Heart left ventricle (tissue), 16 donors: ENCODE measurements at regions of chr1 and their contacts with region 1.

Region 1: DNA sequence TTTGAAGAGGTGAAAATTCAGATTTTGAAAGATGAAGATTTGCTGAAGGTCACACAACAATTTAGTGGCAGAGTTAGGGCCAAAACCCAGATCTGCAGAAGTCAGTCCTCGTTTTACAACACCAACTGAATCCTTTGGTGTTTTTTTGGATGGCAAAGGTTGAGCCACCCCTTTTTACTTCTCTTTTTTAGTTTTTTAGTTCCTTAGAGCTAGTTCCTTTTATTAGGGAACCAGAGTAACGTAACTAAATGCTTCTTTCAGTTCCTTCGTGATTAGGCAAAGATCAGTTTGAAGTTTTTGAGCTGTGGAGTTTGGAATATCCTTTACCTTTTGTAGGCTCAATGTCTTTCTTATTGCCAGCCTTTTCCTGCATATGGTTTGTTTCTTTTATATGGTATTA is 67.9 kb upstream of the ARID1A start:
- DNase-seq: no peak
- ATAC-seq: no peak
- H3K4me3 ChIP-seq: no peak overlapping the region
- H3K27ac ChIP-seq: peak overlapping the region in 1 of 12 donors; percentile 87
- H3K4me1 ChIP-seq: peaks cover 0 to 30% (median 0%) of the 10 kb centered on the region in 12 donors
- H3K27me3 ChIP-seq: no peaks in the 10 kb centered on the region
- CTCF ChIP-seq: no peak
- POLR2A ChIP-seq: no peak

Region 2: DNA sequence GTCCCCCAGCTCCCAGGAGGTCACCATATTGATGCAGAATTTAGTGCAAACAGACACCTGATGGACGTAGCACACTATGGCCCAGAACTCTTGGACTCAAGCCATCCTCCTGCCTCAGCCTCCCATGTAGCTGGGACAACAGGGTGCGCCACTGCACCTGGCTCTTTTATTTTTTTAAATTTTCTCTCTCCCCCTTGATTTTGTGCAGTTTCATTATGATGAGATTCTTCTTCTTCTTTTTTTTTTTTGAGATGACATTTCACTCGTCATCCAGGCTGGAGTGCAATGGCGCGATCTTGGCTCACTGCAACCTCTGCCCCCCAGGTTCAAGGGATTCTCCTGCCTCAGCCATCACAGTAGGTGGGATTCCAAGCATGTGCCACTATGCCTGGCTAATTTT is 34.6 kb before region 1 on chr1:
- intact Hi-C with region 1: no loop called
- DNase-seq: no peak
- ATAC-seq: no peak
- H3K4me3 ChIP-seq: no peak overlapping the region
- H3K27ac ChIP-seq: no peak overlapping the region
- H3K4me1 ChIP-seq: peaks cover 0 to 7% (median 0%) of the 10 kb centered on the region in 12 donors
- H3K27me3 ChIP-seq: no peaks in the 10 kb centered on the region
- CTCF ChIP-seq: no peak
- POLR2A ChIP-seq: no peak

Region 3: DNA sequence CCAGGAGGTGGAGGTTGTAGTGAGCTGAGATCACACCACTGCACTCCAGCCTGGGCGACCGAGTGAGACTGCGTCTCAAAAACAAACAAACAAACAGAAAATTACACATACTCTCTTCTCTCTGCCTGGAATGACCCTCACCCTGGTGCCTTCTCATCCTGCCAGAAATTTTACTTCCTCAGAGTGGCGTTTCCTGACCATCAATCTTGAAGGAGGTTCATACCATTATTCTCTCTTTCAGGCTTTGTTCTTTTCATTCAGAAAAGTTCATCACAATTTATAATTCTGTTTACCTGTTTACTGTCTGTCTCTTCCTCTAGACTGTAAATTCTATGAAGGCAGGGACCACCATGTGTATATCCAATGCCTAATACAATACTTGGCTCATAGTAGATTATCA is 19.1 kb before region 1 on chr1:
- intact Hi-C with region 1: loop called in 1 of 10 experiments (anchors 2 kb)
- DNase-seq: no peak
- ATAC-seq: no peak
- H3K4me3 ChIP-seq: no peak overlapping the region
- H3K27ac ChIP-seq: no peak overlapping the region
- H3K4me1 ChIP-seq: no peaks in the 10 kb centered on the region
- H3K27me3 ChIP-seq: peaks cover 0 to 8% (median 0%) of the 10 kb centered on the region in 9 donors
- CTCF ChIP-seq: no peak
- POLR2A ChIP-seq: no peak

Region 4: DNA sequence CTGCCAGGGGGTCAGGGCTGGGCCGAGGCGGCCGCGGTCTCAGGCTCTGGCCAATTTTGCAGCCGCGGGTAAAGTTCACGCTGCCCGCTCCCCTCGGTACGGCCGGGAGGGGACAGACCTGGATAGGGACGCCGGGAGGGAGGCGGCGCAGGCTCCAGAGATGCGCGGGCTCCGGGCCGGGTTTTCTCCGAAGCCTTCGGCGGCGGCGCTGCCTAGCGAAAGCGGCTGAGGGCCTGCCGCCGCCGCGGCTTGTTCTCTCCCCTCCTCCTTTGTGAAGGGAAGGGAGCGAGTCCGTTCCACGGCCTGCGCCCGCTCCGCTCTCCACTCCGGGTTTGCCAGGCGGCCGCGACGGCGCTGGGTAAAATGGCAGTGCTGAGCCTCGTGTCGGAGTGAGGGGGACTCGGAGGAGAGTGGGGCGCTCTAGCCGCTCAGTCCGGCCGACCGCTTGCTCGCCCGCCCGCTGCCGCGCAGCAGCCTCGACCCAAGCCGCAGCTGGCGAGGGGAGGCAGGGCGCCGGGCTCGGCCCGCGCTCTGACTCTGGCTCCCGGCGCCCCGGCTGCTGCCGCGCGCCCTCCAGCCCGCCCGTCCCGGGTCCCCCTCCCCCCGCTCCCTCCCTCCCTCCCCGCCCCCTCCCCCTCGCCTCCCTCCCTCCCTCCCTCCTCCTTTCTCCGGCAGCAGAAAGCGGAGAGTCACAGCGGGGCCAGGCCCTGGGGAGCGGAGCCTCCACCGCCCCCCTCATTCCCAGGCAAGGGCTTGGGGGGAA is 67.6 kb after region 1 on chr1 and contains the start of gene ARID1A:
- intact Hi-C with region 1: no loop called
- DNase-seq: peak; percentile 96 to 99 (median 96)
- ATAC-seq: peak; percentile 65 to 79 (median 74)
- H3K4me3 ChIP-seq: peak within 1 kb of the TSS; percentile 80 to 96 (median 92)
- H3K27ac ChIP-seq: peak within 1 kb of the TSS; percentile 89 to 98 (median 96)
- H3K4me1 ChIP-seq: peaks cover 16 to 59% (median 49%) of the 10 kb centered on the region in 12 donors
- H3K27me3 ChIP-seq: peaks cover 0 to 4% (median 0%) of the 10 kb centered on the region in 9 donors
- CTCF ChIP-seq: peak in 4 of 12 donors; percentile 8 to 27 (median 14)
- POLR2A ChIP-seq: peak in 1 of 2 donors; percentile 61
- total RNA-seq, gene ARID1A: 29.0 to 73.9 (median 49.9) TPM

Region 5: GRCh38 chr1:26811057-26811456 is 183.1 kb after region 1 on chr1:
- intact Hi-C with region 1: no loop called
- DNase-seq: no peak
- ATAC-seq: no peak
- H3K4me3 ChIP-seq: no peak overlapping the region
- H3K27ac ChIP-seq: no peak overlapping the region
- H3K4me1 ChIP-seq: peaks cover 0 to 18% (median 0%) of the 10 kb centered on the region in 12 donors
- H3K27me3 ChIP-seq: no peaks in the 10 kb centered on the region
- CTCF ChIP-seq: no peak
- POLR2A ChIP-seq: no peak

Region 6: DNA sequence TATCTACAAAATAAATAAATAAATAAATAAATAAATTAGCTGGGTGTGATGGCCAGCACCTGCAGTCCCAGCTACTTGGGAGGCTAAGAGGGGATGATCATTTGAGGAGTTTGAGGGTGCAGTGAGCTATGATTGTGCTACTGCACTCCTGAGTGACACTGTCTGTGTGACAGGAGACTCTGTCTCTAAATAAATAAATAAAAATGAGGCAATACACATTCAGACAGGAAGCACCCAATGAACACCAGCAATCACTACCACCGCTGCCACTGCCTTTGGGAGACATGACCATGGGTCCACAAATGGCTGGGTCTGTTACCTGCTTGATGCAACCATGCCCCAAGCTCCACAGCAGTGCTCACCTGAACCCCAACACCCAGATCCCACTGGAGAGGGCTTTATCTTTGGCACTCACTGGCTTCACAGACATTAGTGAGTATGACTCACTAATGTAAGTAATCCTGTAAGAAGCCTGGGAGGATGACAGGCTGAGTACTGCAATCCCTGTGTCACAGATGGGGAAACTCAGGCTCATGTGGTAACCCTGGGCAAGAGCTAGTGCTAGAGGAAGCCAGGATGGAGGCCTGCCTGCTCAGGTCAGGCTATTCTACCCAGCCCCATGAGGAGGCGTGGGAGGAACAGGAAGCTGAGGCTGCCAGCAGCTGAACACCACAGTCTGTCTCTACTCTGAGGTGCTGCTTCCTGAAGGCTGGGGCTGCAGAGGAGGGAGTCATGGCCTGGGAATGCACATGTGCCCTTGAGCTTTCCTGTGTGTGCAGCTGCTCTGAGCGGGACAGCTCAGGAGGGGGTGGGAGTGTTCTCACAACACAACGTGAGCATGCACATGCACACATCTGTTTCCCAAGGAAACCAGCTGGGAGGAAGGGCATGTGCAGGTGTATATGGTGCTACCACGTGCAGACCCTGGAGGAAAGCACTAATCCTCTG is 483.9 kb after region 1 on chr1:
- intact Hi-C with region 1: no loop called
- DNase-seq: peak; percentile 79 to 92 (median 82)
- ATAC-seq: peak; percentile 58 to 95 (median 94)
- H3K4me3 ChIP-seq: no peak overlapping the region
- H3K27ac ChIP-seq: peak overlapping the region in 9 of 12 donors; percentile 25 to 80 (median 54)
- H3K4me1 ChIP-seq: peaks cover 0 to 64% (median 26%) of the 10 kb centered on the region in 12 donors
- H3K27me3 ChIP-seq: no peaks in the 10 kb centered on the region
- CTCF ChIP-seq: peak in 6 of 12 donors; percentile 16 to 37 (median 22)
- POLR2A ChIP-seq: peak in 1 of 2 donors; percentile 21